ENCODE measurements at regions of chr12 and their contacts with region 1.

Region 1: GRCh38 chr12:110100315-110100970 is 23.7 kb upstream of the IFT81 start:
- DNase-seq: peak; percentile 48
- ATAC-seq: peak; percentile 74
- H3K4me3 ChIP-seq: no peak overlapping the region
- H3K27ac ChIP-seq: no peak overlapping the region
- H3K4me1 ChIP-seq: peaks cover 0 to 5% of the 10 kb centered on the region in 2 experiments; a peak in 2 of 4 replicates
- H3K27me3 ChIP-seq: no peaks in the 10 kb centered on the region
- CTCF ChIP-seq: peak; percentile 89 to 96 (median 93)
- POLR2A ChIP-seq: no peak
- RAD21 ChIP-seq: peak; percentile 93

Region 2: GRCh38 chr12:110224379-110225304 is 124.2 kb after region 1 on chr12:
- CTCF ChIA-PET with region 1: no interaction called
- POLR2A ChIA-PET with region 1: no interaction called
- RAD21 ChIA-PET with region 1: no interaction called
- intact Hi-C with region 1: loop called (anchors 1 kb)
- DNase-seq: no peak
- ATAC-seq: peak; percentile 57
- H3K4me3 ChIP-seq: no peak overlapping the region
- H3K27ac ChIP-seq: no peak overlapping the region
- H3K4me1 ChIP-seq: peaks cover 0 to 8% of the 10 kb centered on the region in 2 experiments; a peak in 1 of 4 replicates
- H3K27me3 ChIP-seq: no peaks in the 10 kb centered on the region
- CTCF ChIP-seq: peak; percentile 13 to 48 (median 47); a peak in 4 of 6 replicates
- POLR2A ChIP-seq: no peak
- RAD21 ChIP-seq: peak; percentile 48

Region 3: GRCh38 chr12:110280779-110281548 is 180.5 kb after region 1 on chr12 and contains the start of gene ATP2A2:
- CTCF ChIA-PET with region 1: interaction called, 3 read pairs
- POLR2A ChIA-PET with region 1: interaction called, 3 read pairs
- RAD21 ChIA-PET with region 1: interaction called in 1 of 2 experiments, 6 read pairs
- intact Hi-C with region 1: loop called (anchors 1 kb)
- DNase-seq: peak; percentile 63
- ATAC-seq: peak; percentile 89
- H3K4me3 ChIP-seq: peak within 1 kb of the TSS; percentile 65 to 87
- H3K27ac ChIP-seq: peak within 1 kb of the TSS; percentile 94
- H3K4me1 ChIP-seq: peaks cover 12 to 25% of the 10 kb centered on the region in 2 experiments
- H3K27me3 ChIP-seq: no peaks in the 10 kb centered on the region
- CTCF ChIP-seq: no peak
- POLR2A ChIP-seq: peak; percentile 93
- RAD21 ChIP-seq: no peak
- total RNA-seq, gene ATP2A2: 239 TPM

Region 4: DNA sequence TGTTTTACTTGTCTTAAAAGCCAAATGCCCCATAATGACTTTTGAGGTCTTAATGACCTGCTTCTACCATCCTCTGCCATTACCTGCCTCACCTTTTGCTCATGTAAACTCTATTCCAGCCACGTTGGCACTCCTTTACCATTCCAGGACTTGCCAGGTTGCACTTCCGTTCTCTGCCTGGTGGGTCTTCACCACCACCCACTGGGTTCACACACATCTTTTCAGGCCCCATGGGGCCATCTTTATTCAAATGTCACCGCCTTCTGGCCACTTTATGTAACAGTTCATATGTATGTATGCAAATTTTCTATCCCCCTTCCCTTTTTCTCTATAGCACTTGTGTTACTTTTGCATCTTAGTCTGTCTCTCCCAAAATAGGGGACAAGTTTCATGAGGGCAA is 238.3 kb after region 1 on chr12:
- CTCF ChIA-PET with region 1: no interaction called
- POLR2A ChIA-PET with region 1: no interaction called
- RAD21 ChIA-PET with region 1: no interaction called
- intact Hi-C with region 1: loop called (anchors 5 kb)
- DNase-seq: peak; percentile 7
- ATAC-seq: peak; percentile 56
- H3K4me3 ChIP-seq: no peak overlapping the region
- H3K27ac ChIP-seq: no peak overlapping the region
- H3K4me1 ChIP-seq: no peaks in the 10 kb centered on the region; a peak in 1 of 4 replicates
- H3K27me3 ChIP-seq: no peaks in the 10 kb centered on the region
- CTCF ChIP-seq: peak in 1 of 3 experiments; percentile 44; a peak in 2 of 6 replicates
- POLR2A ChIP-seq: no peak
- RAD21 ChIP-seq: peak; percentile 27; the same call in 1 of the 2 replicates

Measured in HCT116 (cell line).